OCI-LY7 (cell line): ENCODE measurements at regions of chr14 and their contacts with region 1.

Region 1: DNA sequence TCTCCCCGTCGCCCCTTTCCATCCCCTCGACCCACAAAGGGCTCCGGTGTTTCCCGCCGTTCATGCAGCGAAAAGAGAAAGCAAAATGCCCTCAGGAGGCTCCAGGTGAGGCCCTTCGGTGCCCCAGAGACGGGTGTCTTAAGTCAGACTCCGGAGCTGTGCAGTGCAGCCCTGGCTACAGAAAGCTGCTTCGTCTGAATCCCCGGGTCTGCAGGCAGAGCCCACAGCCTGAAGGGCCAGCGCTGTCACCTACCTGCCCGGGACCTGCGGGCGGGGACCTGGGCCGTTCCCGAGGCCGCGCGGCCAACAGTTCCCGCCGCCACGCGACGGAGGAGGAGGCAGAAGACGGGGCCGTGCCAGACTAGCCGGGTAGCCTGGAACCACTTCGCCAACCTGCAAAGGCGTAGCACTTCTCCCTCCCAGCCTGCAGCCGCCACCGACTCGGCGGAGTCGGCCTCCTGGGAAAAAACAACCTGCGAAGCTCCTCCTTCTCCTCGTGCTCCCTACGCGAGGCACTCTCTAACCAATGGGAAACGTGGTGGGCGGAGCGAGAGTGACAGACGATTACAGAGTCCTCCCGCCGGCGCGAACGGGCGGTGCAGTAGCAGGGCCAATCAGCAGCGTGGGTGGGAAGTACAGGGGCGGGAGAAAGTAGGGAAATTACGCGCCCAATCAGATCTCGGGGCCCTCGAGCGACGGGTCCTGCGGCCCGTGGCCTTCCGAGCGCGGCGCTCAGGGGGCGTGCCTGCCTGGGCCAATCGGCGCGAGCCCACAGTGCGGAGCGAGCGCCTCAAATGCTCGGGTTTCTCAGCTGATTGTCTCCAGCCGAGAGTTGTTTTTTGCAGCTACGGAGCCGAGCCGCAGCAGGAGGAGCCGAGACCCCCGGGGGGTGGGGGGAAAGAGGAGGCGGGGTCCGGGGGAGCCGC is at the starts of genes GPR137C and TXNDC16:
- DNase-seq: peak; percentile 100
- H3K4me3 ChIP-seq: peak within 1 kb of the TSS; percentile 99
- H3K27ac ChIP-seq: peak within 1 kb of the TSS; percentile 84
- H3K4me1 ChIP-seq: peaks cover 41% of the 10 kb centered on the region
- CTCF ChIP-seq: no peak
- total RNA-seq, gene GPR137C: 1.1 TPM in 2 replicates
- total RNA-seq, gene TXNDC16: 13.8 and 21.6 TPM in 2 replicates

Region 2: DNA sequence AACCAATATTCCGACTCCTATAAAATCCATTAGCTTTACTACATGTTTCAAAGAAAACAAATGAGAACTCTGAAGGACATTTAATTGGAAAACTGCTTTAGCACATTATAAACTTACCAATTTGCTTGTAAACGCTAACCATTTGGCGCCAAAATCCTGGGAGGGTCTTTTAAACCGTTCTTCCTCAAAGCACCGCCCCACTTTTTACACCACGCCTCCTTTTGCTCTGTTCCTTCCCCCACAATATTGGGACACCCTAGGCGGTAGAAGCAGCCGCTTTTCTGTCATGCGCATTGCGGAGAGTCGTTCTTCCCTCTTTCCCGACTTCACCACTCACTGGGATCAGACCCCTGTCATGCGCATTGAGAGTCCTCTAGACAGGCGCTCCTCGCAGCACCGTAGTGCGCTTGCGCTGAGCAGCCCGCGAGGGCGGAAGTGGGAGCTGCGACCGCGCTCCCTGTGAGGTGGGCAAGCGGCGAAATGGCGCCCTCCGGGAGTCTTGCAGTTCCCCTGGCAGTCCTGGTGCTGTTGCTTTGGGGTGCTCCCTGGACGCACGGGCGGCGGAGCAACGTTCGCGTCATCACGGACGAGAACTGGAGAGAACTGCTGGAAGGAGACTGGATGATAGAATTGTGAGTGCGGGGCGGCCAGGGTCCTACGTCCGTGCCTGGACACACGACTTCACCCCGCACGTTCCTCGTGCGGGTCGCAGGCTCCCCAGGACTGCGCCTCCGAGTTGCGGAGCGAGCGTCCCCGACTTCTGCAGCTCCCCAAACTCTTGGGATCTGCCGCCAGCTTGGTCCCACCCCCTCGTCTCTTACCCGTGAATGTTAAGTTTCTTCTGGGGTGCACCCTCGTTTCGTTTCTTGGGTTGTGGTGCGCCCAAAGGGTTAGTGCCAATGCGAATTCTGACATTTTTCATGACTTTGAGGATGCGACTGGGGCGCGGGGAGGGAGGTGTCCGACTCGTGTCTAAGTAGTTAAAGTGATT is 1312.2 kb before region 1 on chr14 and contains the start of gene TMX1:
- CTCF ChIA-PET with region 1: no interaction called
- POLR2A ChIA-PET with region 1: interaction called, 3 read pairs
- intact Hi-C with region 1: loop called (anchors 5 kb)
- DNase-seq: peak; percentile 97
- H3K4me3 ChIP-seq: peak within 1 kb of the TSS; percentile 98
- H3K27ac ChIP-seq: peak within 1 kb of the TSS; percentile 60
- H3K4me1 ChIP-seq: peaks cover 44% of the 10 kb centered on the region
- CTCF ChIP-seq: peak; percentile 37; the same call in 1 of the 2 replicates
- total RNA-seq, gene TMX1: 33.6 and 34.3 TPM in 2 replicates

Region 3: DNA sequence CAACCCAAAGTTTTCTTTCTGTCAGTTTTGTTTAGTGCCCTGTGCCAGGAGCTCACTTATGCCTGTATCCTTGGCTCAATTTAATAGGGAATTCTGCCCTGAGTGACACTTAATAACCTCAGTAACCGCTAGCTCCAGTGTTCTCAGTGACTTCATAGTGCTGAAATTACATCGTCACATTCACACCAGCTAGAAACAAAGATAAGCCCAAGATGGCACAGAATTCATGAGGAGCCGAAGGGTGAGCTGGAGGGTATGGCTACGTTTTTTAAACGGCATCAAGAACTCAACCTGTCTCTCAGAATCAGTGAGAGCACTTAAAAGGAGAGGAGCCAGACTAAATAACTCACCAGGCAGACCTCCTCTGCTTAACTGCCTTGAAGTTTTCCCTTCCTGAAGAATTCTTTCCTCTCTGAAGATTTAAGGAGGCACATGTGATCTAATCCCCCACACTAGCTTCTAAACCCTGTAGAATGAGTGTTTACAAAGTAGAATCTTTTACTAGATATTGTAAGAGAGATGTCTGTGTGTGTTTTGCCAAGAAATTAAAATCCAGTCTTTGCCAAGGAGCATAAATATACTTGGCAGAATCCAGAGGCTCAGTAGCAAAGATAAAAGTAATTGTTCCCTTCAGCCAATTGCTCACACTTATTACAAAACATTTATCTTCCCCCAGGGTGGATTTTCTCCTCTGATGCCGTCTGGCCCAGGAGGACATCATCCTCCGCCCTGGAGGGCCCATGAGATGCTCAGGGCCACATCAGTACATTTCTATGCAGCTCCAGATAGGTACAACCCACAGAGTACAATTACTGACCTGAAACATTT is 200.9 kb before region 1 on chr14:
- CTCF ChIA-PET with region 1: no interaction called
- POLR2A ChIA-PET with region 1: no interaction called
- intact Hi-C with region 1: no loop called
- DNase-seq: no peak
- H3K4me3 ChIP-seq: no peak overlapping the region
- H3K27ac ChIP-seq: no peak overlapping the region
- H3K4me1 ChIP-seq: no peaks in the 10 kb centered on the region
- CTCF ChIP-seq: no peak

Region 4: DNA sequence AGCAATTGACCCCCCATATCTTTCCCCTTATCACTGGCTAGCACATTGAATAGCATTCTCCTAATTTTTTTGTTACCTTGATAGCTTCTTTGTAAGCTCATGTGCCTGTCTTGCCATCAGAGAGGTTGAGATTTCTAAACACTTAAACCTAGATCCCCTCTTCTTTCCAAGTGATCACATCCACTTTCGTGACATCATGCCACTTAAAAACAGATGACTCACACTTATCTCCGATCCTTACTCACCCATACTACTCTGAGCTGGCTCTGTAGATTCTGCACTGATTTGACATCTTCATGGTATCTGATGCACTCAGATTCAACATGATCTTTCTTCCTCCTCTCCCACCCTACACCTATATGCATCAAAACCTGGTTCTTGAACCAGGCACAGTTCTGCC is 10.8 kb after region 1 on chr14:
- CTCF ChIA-PET with region 1: no interaction called
- POLR2A ChIA-PET with region 1: interaction called, 17 read pairs
- intact Hi-C with region 1: no loop called
- DNase-seq: no peak
- H3K4me3 ChIP-seq: no peak overlapping the region
- H3K27ac ChIP-seq: no peak overlapping the region
- H3K4me1 ChIP-seq: no peaks in the 10 kb centered on the region
- CTCF ChIP-seq: no peak

Region 5: DNA sequence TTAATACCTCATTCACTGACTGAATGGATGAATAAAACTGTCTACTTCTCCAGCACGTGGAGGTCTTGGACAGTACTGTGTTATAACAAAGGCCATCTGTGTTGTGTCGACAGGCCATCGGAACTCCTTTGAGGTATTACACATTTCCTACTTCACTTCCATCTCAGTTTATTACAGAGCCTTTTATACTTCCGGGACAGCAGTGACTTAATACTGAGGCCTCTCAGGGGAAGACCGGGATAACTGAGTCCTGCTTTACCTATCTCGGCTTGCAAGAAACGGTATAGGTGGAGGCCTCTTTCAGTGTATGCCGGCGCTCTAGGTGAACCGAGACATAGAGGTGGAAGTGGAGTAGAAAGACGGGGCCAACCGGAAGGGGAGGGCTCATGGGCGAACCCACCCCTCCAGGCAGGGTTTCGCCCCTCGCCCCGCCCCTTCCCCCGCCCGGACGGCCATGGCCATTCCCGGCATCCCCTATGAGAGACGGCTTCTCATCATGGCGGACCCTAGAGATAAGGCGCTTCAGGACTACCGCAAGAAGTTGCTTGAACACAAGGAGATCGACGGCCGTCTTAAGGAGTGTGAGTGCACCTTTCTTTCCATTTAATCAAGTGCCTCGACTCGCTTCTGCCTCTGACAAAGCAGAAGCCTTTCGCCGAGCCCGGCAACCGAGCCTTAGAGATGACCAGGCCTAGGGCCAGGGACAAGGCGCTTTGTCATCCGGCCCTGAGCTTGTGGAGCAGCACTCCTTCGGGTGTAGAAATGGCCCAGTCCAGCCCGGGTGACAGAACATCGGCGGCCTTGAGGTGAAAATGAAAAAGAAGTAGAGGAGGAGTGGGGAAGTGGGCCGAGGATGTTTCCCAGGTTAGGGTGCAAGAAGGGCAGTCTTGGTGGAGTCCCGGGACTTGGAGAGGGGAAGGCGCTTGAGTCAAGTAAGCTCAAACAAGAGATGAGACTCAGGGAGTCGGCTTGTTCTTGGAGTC is 154.7 kb after region 1 on chr14 and contains the start of gene PSMC6:
- CTCF ChIA-PET with region 1: no interaction called
- POLR2A ChIA-PET with region 1: no interaction called
- intact Hi-C with region 1: loop called (anchors 2 kb)
- DNase-seq: peak; percentile 92
- H3K4me3 ChIP-seq: peak within 1 kb of the TSS; percentile 93
- H3K27ac ChIP-seq: peak within 1 kb of the TSS; percentile 60
- H3K4me1 ChIP-seq: peaks cover 21% of the 10 kb centered on the region
- CTCF ChIP-seq: no peak
- total RNA-seq, gene PSMC6: 82.8 and 85.4 TPM in 2 replicates

Region 6: GRCh38 chr14:52791203-52792096 is 239.1 kb after region 1 on chr14 and contains the start of gene GNPNAT1:
- CTCF ChIA-PET with region 1: no interaction called
- POLR2A ChIA-PET with region 1: no interaction called
- intact Hi-C with region 1: loop called (anchors 2 kb)
- DNase-seq: peak; percentile 91
- H3K4me3 ChIP-seq: peak within 1 kb of the TSS; percentile 86
- H3K27ac ChIP-seq: peak within 1 kb of the TSS; percentile 56
- H3K4me1 ChIP-seq: peaks cover 16% of the 10 kb centered on the region
- CTCF ChIP-seq: no peak
- total RNA-seq, gene GNPNAT1: 13.3 and 15.5 TPM in 2 replicates

Region 7: GRCh38 chr14:52862632-52863335 is 310.5 kb after region 1 on chr14:
- CTCF ChIA-PET with region 1: no interaction called
- POLR2A ChIA-PET with region 1: no interaction called
- intact Hi-C with region 1: no loop called
- DNase-seq: no peak
- H3K4me3 ChIP-seq: no peak overlapping the region
- H3K27ac ChIP-seq: no peak overlapping the region
- H3K4me1 ChIP-seq: no peaks in the 10 kb centered on the region
- CTCF ChIP-seq: no peak

Region 8: DNA sequence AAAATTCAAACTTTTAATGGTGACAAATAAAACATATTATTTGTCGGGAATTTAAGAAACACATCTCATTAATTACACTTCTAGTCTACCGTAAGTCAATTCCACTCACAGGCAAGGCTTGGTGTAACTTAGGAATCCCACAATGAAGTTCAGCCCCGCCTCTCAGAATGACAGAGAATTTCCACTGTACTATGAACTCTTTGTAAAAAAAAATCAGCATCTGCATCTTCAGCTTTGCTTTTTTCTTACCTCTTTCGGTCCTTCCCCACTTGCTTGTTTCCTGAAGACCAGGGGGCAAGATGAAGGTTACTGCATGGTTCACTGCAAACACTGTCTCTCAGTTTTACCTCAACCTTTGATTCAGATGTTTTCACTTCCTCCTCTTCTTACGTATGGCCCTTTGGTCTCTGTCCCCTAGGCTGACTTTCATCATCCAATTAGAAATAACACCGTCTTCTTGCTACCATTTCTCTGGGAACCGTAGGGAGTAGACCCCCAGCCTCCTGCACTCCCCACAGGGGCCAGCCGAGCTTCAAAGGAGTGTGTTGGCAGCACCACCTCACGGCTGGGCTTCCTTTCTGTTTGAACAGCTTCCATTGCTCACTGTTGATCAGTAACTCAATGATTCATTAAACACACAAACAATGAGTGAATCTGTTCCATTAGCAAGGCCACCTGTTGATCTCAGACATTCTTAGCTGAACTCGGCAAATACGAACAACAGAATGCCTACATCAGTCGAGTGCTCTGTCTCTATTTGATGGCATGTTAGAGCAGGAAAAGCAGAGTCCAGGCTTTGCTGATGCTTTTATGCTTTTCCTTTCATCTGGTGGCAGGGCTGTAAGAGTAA is 1061.3 kb after region 1 on chr14:
- CTCF ChIA-PET with region 1: no interaction called
- POLR2A ChIA-PET with region 1: no interaction called
- intact Hi-C with region 1: loop called (anchors 5 kb)
- DNase-seq: peak; percentile 96
- H3K4me3 ChIP-seq: peak overlapping the region; percentile 69
- H3K27ac ChIP-seq: peak overlapping the region; percentile 95
- H3K4me1 ChIP-seq: peaks cover 64% of the 10 kb centered on the region
- CTCF ChIP-seq: peak; percentile 44; the same call in 1 of the 2 replicates